Aorta (tissue), 5 donors: ENCODE measurements at regions of chr3 and their contacts with region 1.

Region 1: GRCh38 chr3:186617038-186617946 is 4.4 kb downstream of the AHSG start:
- DNase-seq: peak; percentile 96 to 97
- ATAC-seq: peak; percentile 92
- H3K4me3 ChIP-seq: no peak overlapping the region
- H3K27ac ChIP-seq: no peak overlapping the region
- H3K4me1 ChIP-seq: no peaks in the 10 kb centered on the region
- H3K27me3 ChIP-seq: peaks cover 0 to under 1% of the 10 kb centered on the region in 2 donors

Region 2: GRCh38 chr3:186669378-186670084 is 52.2 kb after region 1 on chr3:
- intact Hi-C with region 1: no loop called
- DNase-seq: no peak
- ATAC-seq: no peak
- H3K4me3 ChIP-seq: no peak overlapping the region
- H3K27ac ChIP-seq: no peak overlapping the region
- H3K4me1 ChIP-seq: no peaks in the 10 kb centered on the region
- H3K27me3 ChIP-seq: peaks cover 0 to 1% of the 10 kb centered on the region in 2 donors

Region 3: GRCh38 chr3:186783073-186783730 is 165.9 kb after region 1 on chr3 and contains the start of gene EIF4A2:
- intact Hi-C with region 1: loop called in 1 of 2 experiments (anchors 10 kb)
- DNase-seq: peak; percentile 93 to 96
- ATAC-seq: peak; percentile 95
- H3K4me3 ChIP-seq: peak within 1 kb of the TSS; percentile 80
- H3K27ac ChIP-seq: peak within 1 kb of the TSS; percentile 88 to 93
- H3K4me1 ChIP-seq: peaks cover 0 to 5% of the 10 kb centered on the region in 2 donors
- H3K27me3 ChIP-seq: peaks cover 0 to 1% of the 10 kb centered on the region in 2 donors
- total RNA-seq, gene EIF4A2: 330 to 374 TPM

Region 4: GRCh38 chr3:186815435-186815834 is 198.1 kb after region 1 on chr3:
- intact Hi-C with region 1: loop called (anchors 5 kb)
- DNase-seq: no peak
- ATAC-seq: no peak
- H3K4me3 ChIP-seq: no peak overlapping the region
- H3K27ac ChIP-seq: no peak overlapping the region
- H3K4me1 ChIP-seq: no peaks in the 10 kb centered on the region
- H3K27me3 ChIP-seq: no peaks in the 10 kb centered on the region

Region 5: GRCh38 chr3:186821429-186822367 is 204.4 kb after region 1 on chr3:
- intact Hi-C with region 1: loop called (anchors 5 kb)
- DNase-seq: no peak
- ATAC-seq: no peak
- H3K4me3 ChIP-seq: no peak overlapping the region
- H3K27ac ChIP-seq: no peak overlapping the region
- H3K4me1 ChIP-seq: no peaks in the 10 kb centered on the region
- H3K27me3 ChIP-seq: no peaks in the 10 kb centered on the region